ENCODE measurements at regions of chr20 and their contacts with region 1.

Region 1: DNA sequence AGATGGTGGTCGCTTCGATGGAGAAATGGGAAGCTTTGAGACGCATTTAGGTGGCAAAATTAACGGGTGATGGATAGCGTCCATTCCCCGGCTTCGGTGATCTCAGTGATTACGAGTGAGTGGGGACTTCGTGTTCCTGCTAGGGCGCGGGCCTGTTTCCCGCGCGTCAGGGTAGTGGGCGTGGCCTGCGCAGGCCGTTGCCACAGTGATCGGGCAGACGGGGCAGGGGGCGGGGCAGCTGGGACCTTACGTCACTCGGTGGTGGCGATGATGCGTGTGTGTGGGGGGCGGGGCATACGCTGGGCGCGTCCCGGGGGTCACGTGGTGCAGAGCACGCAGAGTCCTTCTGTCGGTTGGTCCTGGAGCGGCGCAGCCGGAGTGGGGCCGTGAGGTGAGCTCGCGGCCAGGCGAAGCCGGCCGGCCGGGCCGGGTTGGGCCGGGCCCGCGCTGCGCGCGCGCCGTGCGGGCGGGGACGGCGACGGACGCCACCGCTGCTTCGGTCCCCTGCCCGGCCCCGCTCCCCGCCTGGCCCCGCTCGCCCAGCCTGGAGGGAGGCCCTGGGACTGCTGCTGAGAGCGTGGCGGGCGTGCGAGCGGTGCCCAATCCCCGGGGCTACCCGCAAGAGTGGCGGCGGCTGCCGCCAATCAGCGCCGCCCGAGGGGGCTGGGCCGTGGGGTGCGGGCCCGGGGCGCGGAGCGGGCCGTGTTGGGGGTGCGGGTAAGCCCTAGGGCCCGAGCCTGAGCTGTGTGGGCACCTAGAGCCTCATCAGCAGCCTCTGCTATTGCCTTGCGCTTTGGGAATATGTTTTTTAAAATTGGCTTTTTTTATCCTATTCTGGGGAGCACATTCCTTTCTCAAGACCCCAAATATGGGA is at the start of gene PHF20:
- DNase-seq: peak; percentile 98
- H3K4me3 Mint-ChIP-seq: peak within 1 kb of the TSS; percentile 88
- H3K27ac Mint-ChIP-seq: peak within 1 kb of the TSS; percentile 87
- H3K4me1 Mint-ChIP-seq: peaks cover 46% of the 10 kb centered on the region
- H3K27me3 Mint-ChIP-seq: no peaks in the 10 kb centered on the region
- total RNA-seq, gene PHF20: 55.1 and 64.3 TPM in 2 replicates

Region 2: DNA sequence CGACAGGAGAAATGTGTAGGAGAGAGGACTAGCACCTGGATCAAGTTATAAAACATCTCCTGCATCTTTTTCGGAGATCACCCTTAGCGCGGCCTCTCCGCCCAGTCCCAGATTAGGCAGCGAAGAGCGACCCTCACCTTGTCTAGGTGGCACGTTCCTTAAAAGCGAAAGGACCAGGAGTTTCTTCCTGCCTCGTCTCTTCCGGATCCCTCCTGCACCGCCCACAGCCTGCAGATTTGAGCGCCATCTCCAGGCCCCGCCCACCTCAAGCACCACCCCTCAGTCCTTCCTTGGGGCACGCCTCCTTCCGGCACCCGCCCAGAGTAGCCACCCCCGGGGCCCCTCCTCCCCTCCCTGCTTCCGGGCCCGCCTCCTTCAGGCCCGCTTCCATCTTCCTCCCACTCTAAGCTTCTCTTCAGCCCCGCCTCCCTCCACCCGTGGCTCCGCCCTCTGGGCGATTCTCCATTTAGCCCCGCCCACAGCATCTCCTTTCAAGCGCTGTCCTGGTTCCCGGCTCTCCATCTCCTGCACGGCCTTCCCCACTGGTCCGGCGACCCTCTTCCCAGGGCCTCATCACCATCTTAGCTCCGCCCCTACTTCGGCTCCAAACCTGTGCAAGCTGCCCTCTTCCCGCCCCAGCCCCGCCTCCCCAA is 1778.9 kb before region 1 on chr20:
- intact Hi-C with region 1: loop called (anchors 10 kb)
- DNase-seq: peak; percentile 99
- H3K4me3 Mint-ChIP-seq: peak overlapping the region; percentile 91
- H3K27ac Mint-ChIP-seq: peak overlapping the region; percentile 84
- H3K4me1 Mint-ChIP-seq: peaks cover 40% of the 10 kb centered on the region
- H3K27me3 Mint-ChIP-seq: no peaks in the 10 kb centered on the region

Region 3: DNA sequence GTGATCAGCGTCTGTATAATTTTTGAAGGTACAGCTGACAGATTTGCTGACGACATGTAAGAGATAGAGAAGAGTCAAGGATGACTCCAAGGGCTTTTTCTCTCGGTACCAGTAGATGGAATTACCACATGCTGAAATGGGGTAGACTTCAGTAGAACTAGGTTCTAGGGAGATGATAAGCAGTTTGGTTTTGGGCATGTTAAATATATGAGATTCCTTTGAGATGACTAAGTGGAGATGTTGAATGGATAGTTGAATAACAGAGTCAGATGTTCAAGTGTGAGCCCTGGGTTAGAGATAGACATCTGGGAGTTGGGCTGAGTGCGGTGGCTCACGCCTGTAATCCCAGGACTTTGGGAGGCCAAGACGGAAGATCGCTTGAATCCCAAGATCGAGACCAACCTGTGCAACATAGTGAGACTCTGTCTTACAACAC is 49.9 kb after region 1 on chr20:
- intact Hi-C with region 1: no loop called
- DNase-seq: no peak
- H3K4me3 Mint-ChIP-seq: no peak overlapping the region
- H3K27ac Mint-ChIP-seq: peak overlapping the region; percentile 21
- H3K4me1 Mint-ChIP-seq: peaks cover 24% of the 10 kb centered on the region
- H3K27me3 Mint-ChIP-seq: no peaks in the 10 kb centered on the region